ENCODE measurements at regions of chr4 and their contacts with region 1.

Region 1: GRCh38 chr4:113012786-113013185 is 36.7 kb upstream of the ANK2 start:
- DNase-seq: peak in 1 of 10 donors; percentile 25
- H3K4me3 ChIP-seq: peak overlapping the region in 9 of 59 donors; percentile 0 to 41 (median 13)
- H3K27ac ChIP-seq: peak overlapping the region in 58 of 59 donors; percentile 3 to 88 (median 76)
- H3K27me3 ChIP-seq: no peaks in the 10 kb centered on the region
- CTCF ChIP-seq: no peak

Region 2: GRCh38 chr4:112765317-112765975 is 247.3 kb before region 1 on chr4:
- intact Hi-C with region 1: no loop called
- DNase-seq: no peak
- H3K4me3 ChIP-seq: no peak overlapping the region
- H3K27ac ChIP-seq: no peak overlapping the region
- H3K27me3 ChIP-seq: no peaks in the 10 kb centered on the region
- CTCF ChIP-seq: peak; percentile 16 to 68 (median 50)

Region 3: GRCh38 chr4:112951362-112952312 is 61.1 kb before region 1 on chr4:
- intact Hi-C with region 1: loop called in 1 of 2 experiments (anchors 10 kb)
- DNase-seq: no peak
- H3K4me3 ChIP-seq: peak overlapping the region in 45 of 59 donors; percentile 1 to 53 (median 26)
- H3K27ac ChIP-seq: peak overlapping the region; percentile 49 to 98 (median 91)
- H3K27me3 ChIP-seq: no peaks in the 10 kb centered on the region
- CTCF ChIP-seq: peak; percentile 45 to 87 (median 75)

Region 4: GRCh38 chr4:113052379-113052951 is 39.7 kb after region 1 on chr4:
- intact Hi-C with region 1: loop called (anchors 5 kb)
- DNase-seq: peak in 5 of 10 donors; percentile 32 to 56 (median 52)
- H3K4me3 ChIP-seq: peak overlapping the region in 47 of 59 donors; percentile 9 to 79 (median 66)
- H3K27ac ChIP-seq: peak overlapping the region; percentile 3 to 92 (median 84)
- H3K27me3 ChIP-seq: no peaks in the 10 kb centered on the region
- CTCF ChIP-seq: no peak

Region 5: GRCh38 chr4:113094802-113095201 is 82.0 kb after region 1 on chr4:
- intact Hi-C with region 1: loop called in 1 of 2 experiments (anchors 5 kb)
- DNase-seq: no peak
- H3K4me3 ChIP-seq: peak overlapping the region in 6 of 59 donors; percentile 7 to 21 (median 11)
- H3K27ac ChIP-seq: peak overlapping the region in 38 of 59 donors; percentile 1 to 74 (median 40)
- H3K27me3 ChIP-seq: no peaks in the 10 kb centered on the region
- CTCF ChIP-seq: peak; percentile 57 to 95 (median 82)

Region 6: DNA sequence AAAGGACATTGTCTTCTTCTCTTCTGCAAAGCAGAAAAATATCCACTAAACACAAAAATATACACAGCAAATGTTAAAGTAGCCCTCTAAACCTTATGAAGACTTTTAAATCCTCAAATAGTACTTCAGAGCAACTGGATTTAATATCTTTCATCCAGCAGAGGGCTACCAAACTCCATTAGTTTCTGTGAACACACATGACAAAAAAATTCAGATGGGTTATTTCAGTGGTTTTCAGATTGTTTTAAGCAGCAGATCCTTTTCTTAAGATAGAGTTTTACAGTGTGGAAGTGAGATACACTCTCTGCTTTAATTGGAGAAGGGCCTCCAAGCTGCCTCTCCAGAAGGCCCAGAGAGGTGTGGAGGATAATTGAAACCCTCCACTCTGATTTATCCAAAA is 93.3 kb after region 1 on chr4:
- intact Hi-C with region 1: no loop called
- DNase-seq: no peak
- H3K4me3 ChIP-seq: peak overlapping the region in 1 of 59 donors; percentile 2
- H3K27ac ChIP-seq: peak overlapping the region in 38 of 59 donors; percentile 0 to 87 (median 42)
- H3K27me3 ChIP-seq: no peaks in the 10 kb centered on the region
- CTCF ChIP-seq: peak in 55 of 56 donors; percentile 30 to 80 (median 65)

Measured in dorsolateral prefrontal cortex (tissue), 120 donors.